Ovary (tissue), 10 donors: ENCODE measurements at regions of chrX and their contacts with region 1.

Region 1: GRCh38 chrX:2627272-2627867 is 63.7 kb upstream of the CD99 start:
- DNase-seq: peak in 2 of 5 donors; percentile 35 to 38
- H3K4me3 ChIP-seq: no peak overlapping the region
- H3K27ac ChIP-seq: no peak overlapping the region
- H3K4me1 ChIP-seq: no peaks in the 10 kb centered on the region
- H3K27me3 ChIP-seq: no peaks in the 10 kb centered on the region
- CTCF ChIP-seq: peak in 2 of 3 donors; percentile 13 to 21
- EP300 ChIP-seq: no peak
- POLR2A ChIP-seq: no peak

Region 2: GRCh38 chrX:2561456-2561855 is 65.9 kb before region 1 on chrX:
- intact Hi-C with region 1: loop called in 1 of 4 experiments (anchors 2 kb)
- DNase-seq: no peak
- H3K4me3 ChIP-seq: no peak overlapping the region
- H3K27ac ChIP-seq: no peak overlapping the region
- H3K4me1 ChIP-seq: no peaks in the 10 kb centered on the region
- H3K27me3 ChIP-seq: no peaks in the 10 kb centered on the region
- CTCF ChIP-seq: no peak
- EP300 ChIP-seq: no peak
- POLR2A ChIP-seq: no peak